Heart left ventricle (tissue), 16 donors: ENCODE measurements at regions of chr7 and their contacts with region 1.

Region 1: DNA sequence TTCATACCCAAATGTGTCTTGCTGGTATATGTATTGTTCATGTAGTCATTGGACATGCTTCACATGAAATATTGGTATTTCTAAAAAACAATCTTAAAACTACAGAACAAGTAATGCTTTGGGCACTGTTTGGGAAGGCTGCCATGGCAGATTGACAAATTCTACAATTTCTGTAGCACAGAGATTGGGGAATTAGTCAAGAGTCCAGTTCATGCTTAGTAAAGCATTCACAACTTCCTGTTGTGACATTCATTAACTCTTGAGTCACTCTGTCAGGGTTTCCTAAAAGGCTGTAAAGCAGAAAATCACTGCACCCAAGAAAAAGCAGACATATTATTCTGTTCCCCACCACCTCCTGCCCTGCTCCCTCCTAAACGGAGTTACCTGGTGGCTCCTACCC is 398.9 kb downstream of the PHTF2 start:
- DNase-seq: no peak
- ATAC-seq: no peak
- H3K4me3 ChIP-seq: no peak overlapping the region
- H3K27ac ChIP-seq: no peak overlapping the region
- H3K4me1 ChIP-seq: peaks cover 0 to 4% (median 0%) of the 10 kb centered on the region in 12 donors
- H3K27me3 ChIP-seq: no peaks in the 10 kb centered on the region
- CTCF ChIP-seq: no peak
- POLR2A ChIP-seq: no peak

Region 2: GRCh38 chr7:78254726-78255055 is 57.2 kb after region 1 on chr7:
- intact Hi-C with region 1: loop called in 1 of 10 experiments (anchors 10 kb)
- DNase-seq: no peak
- ATAC-seq: no peak
- H3K4me3 ChIP-seq: no peak overlapping the region
- H3K27ac ChIP-seq: no peak overlapping the region
- H3K4me1 ChIP-seq: no peaks in the 10 kb centered on the region
- H3K27me3 ChIP-seq: no peaks in the 10 kb centered on the region
- CTCF ChIP-seq: no peak
- POLR2A ChIP-seq: no peak